Vagina (tissue), 2 donors: ENCODE measurements at regions of chr1 and their contacts with region 1.

Region 1: DNA sequence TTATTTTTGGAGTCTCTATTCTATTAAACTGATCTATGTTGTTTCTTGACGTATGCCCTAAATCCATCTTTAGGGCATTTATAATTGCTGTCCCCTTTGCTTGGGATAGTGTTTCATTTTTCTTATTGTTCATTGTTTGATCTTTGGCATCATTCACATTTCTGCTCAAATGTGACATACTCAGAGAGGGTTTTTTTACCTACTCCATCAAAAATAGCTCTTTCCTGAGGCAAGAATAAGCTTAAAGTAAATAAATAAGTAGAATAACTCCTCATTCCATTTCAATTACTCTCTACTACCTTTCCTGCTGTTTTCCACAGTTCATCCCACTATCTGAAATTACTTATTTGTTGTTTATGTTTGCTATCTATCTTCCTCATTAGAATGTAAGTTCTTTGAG is 119.9 kb downstream of the LRRC40 start:
- DNase-seq: no peak
- H3K4me3 ChIP-seq: no peak overlapping the region
- H3K27ac ChIP-seq: no peak overlapping the region
- H3K4me1 ChIP-seq: no peaks in the 10 kb centered on the region
- H3K27me3 ChIP-seq: no peaks in the 10 kb centered on the region
- CTCF ChIP-seq: no peak
- POLR2A ChIP-seq: no peak

Region 2: DNA sequence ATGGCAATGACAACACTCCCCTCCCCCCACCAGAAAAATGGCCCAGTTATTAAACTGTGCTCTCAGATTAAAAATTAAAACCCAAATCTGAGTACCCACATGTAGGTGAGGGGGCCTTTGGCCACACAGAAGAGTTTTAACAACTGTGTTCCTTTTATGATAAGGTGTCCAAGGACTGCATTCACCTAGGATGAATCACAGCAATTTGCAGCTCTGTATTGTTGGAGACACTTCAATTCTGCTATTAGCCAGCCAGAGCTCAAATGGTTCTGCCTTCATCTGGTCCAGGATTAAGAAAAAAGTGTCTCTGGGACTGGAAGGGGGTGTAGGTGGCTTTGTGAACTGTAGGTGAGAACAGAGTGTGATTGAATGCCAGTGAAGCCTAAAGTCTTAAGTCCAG is 1991.7 kb before region 1 on chr1:
- intact Hi-C with region 1: loop called (anchors 5 kb)
- DNase-seq: no peak
- H3K4me3 ChIP-seq: no peak overlapping the region
- H3K27ac ChIP-seq: no peak overlapping the region
- H3K4me1 ChIP-seq: no peaks in the 10 kb centered on the region
- H3K27me3 ChIP-seq: no peaks in the 10 kb centered on the region
- CTCF ChIP-seq: no peak
- POLR2A ChIP-seq: no peak

Region 3: DNA sequence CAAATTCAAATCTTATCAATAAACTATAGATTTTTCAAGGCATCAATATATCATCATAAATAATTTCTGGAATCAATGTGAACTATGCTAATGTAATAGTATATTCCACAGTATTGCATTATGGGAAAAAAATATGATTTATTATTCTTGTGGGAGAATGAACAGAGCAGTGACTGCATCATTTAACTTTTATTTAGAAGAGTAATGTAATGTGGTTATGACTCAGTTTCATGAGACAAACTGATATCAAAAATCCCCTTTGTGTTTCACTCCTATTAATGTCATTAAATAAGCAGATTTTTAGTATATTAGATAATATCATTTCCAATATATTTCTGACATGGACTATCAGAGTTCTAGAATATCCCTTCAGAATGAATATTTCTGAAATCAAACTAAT is 67.7 kb before region 1 on chr1:
- intact Hi-C with region 1: no loop called
- DNase-seq: no peak
- H3K4me3 ChIP-seq: no peak overlapping the region
- H3K27ac ChIP-seq: no peak overlapping the region
- H3K4me1 ChIP-seq: no peaks in the 10 kb centered on the region
- H3K27me3 ChIP-seq: no peaks in the 10 kb centered on the region
- CTCF ChIP-seq: no peak
- POLR2A ChIP-seq: no peak